Adrenal gland (tissue), 19 donors: ENCODE measurements at regions of chr18 and their contacts with region 1.

Region 1: DNA sequence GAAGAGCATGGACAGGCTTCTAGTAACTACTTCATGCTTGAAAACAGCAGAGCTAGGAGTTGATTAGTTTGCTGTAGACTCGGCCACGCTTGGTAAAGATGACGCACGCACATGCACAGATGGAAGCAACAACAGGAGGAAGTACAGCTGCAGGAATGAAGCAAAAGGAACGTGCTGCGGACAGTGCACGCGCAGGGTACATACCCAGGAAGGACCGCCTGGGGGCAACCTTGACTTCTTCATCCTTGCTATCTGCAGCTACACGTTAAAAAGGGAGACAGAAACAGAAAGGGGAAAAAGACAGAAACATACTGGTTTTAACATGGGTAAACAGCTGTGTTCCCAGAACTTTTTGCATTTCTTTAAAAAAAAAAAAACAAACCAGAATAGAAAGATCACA is 17.7 kb downstream of the SLC66A2 start:
- DNase-seq: peak in 3 of 7 donors; percentile 13 to 36 (median 26)
- H3K4me3 ChIP-seq: no peak overlapping the region
- H3K27ac ChIP-seq: peak overlapping the region in 1 of 5 donors; percentile 66
- H3K4me1 ChIP-seq: peaks cover 0 to 17% of the 10 kb centered on the region in 2 donors
- H3K27me3 ChIP-seq: no peaks in the 10 kb centered on the region
- CTCF ChIP-seq: peak in 1 of 6 experiments; percentile 5
- POLR2A ChIP-seq: no peak

Region 2: DNA sequence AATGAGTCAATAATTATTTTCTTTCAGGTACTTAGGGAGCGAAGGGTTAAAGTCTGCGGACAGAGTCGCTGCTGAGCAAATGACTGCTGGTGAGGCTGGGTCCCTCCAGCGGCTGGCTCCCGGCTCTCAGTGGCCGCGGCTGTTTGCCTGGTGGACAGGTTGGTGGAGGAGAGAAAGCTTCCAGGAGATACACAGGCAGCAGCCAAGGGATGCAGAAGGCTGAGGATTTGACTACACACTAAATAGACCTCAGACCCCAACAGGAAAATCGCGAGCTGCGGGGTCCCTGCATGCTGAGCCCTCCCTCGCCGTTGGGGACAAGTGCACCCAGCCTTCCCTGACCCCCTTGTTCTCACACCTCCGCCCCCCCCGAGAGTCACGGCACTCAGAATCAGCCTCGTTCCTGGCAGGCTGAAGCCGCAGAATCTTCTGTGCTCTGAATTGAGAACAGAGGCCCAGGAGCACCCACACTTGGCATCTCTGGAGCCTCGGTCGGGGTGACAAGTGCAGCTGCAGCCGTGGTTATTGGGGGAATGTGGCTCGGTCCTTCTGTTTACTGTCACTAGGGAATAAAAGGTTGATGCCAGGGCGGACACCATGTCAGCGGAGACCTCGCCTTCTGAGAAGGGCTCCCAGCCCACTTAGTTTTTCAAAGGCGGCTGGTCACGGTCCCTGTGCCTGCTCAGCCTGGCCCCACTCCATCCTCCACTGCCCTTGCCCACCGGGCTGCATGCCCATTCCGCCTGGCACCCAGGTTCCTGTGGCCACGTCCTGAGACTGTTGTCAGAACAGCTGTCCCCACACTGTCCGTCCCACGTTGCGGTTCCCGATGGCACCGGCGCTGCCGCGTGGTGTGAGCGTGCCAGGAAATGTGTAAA is 56.3 kb before region 1 on chr18:
- intact Hi-C with region 1: loop called in 1 of 2 experiments (anchors 10 kb)
- DNase-seq: peak in 2 of 7 donors; percentile 10 to 34
- H3K4me3 ChIP-seq: no peak overlapping the region
- H3K27ac ChIP-seq: no peak overlapping the region
- H3K4me1 ChIP-seq: no peaks in the 10 kb centered on the region
- H3K27me3 ChIP-seq: no peaks in the 10 kb centered on the region
- CTCF ChIP-seq: no peak
- POLR2A ChIP-seq: no peak